Mucosa of descending colon (tissue), 3 donors: ENCODE measurements at regions of chr21 and their contacts with region 1.

Region 1: DNA sequence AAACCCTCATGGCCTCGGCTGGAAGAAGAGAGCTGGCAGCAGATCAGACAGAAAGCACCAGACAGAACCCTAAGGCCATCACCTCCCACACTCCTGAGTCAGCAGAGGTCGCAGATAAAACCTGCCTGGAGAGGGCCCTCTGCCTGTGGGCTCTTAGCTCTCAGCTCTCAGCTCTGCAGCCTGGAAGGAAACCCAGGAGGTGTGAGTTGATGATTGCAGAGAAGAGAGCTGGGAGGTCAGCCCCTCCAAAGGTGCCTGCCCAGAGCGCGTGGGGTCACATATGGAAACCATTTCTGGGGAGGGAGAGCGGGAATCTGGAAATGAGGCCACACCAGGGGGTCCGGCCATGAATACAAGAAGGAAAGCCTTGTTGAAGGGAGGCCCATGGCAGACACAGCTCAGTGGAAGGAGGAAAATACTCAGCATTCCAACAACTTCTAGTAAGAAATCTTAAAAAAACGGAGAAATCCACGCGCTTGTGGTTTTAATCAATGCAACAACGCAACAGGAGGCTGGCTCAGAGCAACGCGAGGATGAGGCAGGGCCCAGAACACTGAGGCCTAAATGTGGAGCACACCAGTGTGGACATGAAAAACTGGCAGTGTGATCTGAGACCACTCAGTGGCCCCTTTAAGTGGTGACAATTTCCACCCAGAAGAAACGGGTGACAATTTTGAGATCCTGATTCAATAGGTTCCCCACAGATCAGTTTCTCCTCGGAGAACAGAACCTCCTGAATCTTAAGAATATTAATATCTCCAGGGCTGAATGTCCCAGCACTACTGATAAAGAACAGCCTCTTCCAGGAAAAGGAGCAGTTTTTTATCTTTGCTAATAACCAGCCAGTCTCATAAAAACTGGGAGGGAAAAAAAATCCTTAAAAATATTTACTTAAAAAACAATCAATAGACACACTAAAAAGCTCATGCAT is 45.7 kb downstream of the PSMG1 start:
- DNase-seq: no peak
- ATAC-seq: peak; percentile 9
- H3K4me3 ChIP-seq: no peak overlapping the region
- H3K4me1 ChIP-seq: no peaks in the 10 kb centered on the region
- CTCF ChIP-seq: no peak

Region 2: DNA sequence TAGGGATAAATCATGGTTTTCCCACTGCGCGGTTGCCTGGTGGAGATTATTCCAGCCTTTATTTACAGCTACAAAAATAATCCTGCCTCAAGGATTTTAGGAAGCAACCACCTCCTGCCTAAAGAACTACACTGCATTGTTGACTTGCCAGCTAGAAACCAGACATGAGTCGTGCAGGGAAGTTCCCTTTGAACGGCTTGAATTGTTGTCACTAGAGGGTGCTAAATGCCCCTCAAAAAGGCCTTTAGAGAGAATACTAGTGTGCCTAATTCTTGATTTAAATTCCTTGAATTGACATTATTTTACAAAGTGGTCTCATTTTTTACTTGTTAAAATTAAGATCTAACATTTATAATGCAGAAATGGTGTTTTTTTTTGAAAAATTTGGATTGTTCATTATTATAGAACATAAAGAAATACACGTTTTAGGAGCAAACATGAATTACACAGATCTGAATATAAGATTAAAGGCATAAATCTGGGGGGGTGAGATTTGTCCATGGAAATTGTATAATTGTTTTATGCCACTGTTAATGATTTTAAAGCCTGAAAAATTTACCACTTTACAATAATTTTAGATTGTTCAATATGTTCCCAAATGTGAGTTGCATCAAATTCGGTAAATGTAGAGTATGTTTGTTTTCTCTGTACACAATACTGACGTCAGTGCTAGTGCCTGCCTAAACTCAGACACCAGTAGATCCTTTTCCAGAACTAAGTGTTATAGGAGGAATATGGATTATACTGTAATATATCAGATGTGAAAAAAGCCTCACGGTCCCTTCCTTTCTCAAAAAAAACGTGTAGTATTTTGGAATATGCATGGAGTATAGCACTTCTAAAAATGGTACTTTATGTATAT is 631.6 kb before region 1 on chr21:
- intact Hi-C with region 1: loop called in 1 of 2 experiments (anchors 10 kb)
- DNase-seq: peak in 1 of 3 donors; percentile 73
- ATAC-seq: peak; percentile 86
- H3K4me3 ChIP-seq: no peak overlapping the region
- H3K4me1 ChIP-seq: peaks cover 4% of the 10 kb centered on the region
- CTCF ChIP-seq: peak; percentile 26

Region 3: GRCh38 chr21:38733973-38734546 is 403.5 kb before region 1 on chr21:
- intact Hi-C with region 1: loop called (anchors 5 kb)
- DNase-seq: peak; percentile 89 to 99 (median 96)
- ATAC-seq: peak; percentile 94
- H3K4me3 ChIP-seq: no peak overlapping the region
- H3K4me1 ChIP-seq: peaks cover 10% of the 10 kb centered on the region
- CTCF ChIP-seq: peak; percentile 88